CD14-positive monocyte (primary cell): ENCODE measurements at regions of chr2 and their contacts with region 1.

Region 1: GRCh38 chr2:231604685-231605606 is 12.3 kb downstream of the TEX44 start:
- DNase-seq: peak; percentile 99 to 100 (median 99)
- H3K4me3 ChIP-seq: peak overlapping the region; percentile 27 to 72 (median 29)
- H3K4me3 Mint-ChIP-seq: peak overlapping the region; percentile 54 to 77
- H3K27ac ChIP-seq: peak overlapping the region; percentile 62 to 96
- H3K27ac Mint-ChIP-seq: peak overlapping the region; percentile 76 to 95 (median 92)
- H3K4me1 ChIP-seq: peaks cover 13 to 27% of the 10 kb centered on the region in 2 donors
- H3K4me1 Mint-ChIP-seq: peaks cover 23% of the 10 kb centered on the region
- H3K27me3 ChIP-seq: no peaks in the 10 kb centered on the region
- H3K27me3 Mint-ChIP-seq: peaks cover 2 to 20% (median 18%) of the 10 kb centered on the region in 3 donors
- CTCF ChIP-seq: no peak

Region 2: DNA sequence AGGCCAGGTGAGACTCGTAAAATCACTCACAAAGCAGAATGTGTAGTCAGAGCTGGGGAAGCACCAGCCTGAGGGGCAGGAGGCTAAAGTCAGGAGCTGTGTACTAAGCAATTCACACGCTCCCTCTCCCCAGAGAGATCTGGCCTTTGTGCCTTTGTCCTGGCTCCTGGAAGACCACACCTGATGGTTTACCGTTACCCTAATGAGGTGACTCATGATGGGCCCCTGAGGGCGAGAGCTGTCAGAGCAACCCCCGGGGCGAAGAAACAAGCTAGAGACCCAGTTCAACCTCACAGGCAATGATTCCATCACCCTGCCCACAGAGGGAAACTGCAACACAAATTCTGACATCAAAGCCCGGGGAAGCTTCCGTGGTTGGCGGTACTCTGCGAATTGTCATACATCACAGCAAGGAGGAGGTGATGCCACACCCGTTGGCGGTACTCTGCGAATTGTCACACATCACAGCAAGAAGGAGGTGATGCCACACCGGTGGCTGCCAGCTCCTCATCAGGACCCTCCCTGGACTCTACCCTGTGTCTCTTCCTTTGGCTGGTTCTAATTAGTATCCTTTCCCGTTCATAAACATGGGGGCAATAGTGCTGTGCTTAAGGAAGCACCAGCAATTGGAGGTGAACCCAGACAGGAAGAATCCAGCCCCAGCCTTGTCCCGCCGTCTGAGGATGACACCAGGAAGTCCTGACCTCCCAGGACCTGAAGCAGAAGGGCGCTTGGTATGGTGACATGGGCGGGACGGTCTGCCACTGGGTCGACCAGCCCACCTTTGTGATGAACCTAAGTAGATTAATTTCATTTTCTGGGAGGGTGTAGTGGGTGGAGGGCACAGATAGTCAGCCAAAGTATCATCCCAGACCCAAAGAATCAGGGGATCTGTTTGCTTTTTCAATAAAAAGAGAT is 178.9 kb before region 1 on chr2:
- intact Hi-C with region 1: no loop called
- DNase-seq: no peak
- H3K4me3 ChIP-seq: no peak overlapping the region
- H3K4me3 Mint-ChIP-seq: no peak overlapping the region
- H3K27ac ChIP-seq: no peak overlapping the region
- H3K27ac Mint-ChIP-seq: no peak overlapping the region
- H3K4me1 ChIP-seq: no peaks in the 10 kb centered on the region
- H3K4me1 Mint-ChIP-seq: peaks cover 9% of the 10 kb centered on the region
- H3K27me3 ChIP-seq: no peaks in the 10 kb centered on the region
- H3K27me3 Mint-ChIP-seq: peaks cover 0 to 3% (median 1%) of the 10 kb centered on the region in 3 donors
- CTCF ChIP-seq: no peak

Region 3: DNA sequence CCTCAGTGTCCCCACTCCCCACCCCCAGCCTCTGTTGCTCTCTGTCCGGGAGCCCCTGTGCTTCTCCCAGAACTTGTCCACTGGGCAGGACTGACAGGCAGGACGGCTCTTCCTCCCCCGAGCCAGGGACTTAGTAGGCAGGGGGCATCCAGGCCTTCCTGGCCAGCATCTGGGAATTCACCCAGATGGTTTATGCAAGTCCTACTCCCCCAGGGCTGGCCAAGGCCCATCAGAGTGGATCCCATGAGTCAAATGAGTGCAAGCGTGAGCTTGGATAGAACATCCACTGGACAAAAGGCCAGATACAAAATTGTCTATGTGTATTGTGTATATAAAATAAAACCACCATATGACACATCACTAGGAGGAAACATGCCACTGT is 82.2 kb before region 1 on chr2:
- intact Hi-C with region 1: loop called in 1 of 2 experiments (anchors 5 kb)
- DNase-seq: no peak
- H3K4me3 ChIP-seq: no peak overlapping the region
- H3K4me3 Mint-ChIP-seq: no peak overlapping the region
- H3K27ac ChIP-seq: no peak overlapping the region
- H3K27ac Mint-ChIP-seq: no peak overlapping the region
- H3K4me1 ChIP-seq: peaks cover 11 to 19% of the 10 kb centered on the region in 2 donors
- H3K4me1 Mint-ChIP-seq: peaks cover 27% of the 10 kb centered on the region
- H3K27me3 ChIP-seq: peaks cover 0 to 19% of the 10 kb centered on the region in 2 donors
- H3K27me3 Mint-ChIP-seq: peaks cover 11 to 61% (median 36%) of the 10 kb centered on the region in 3 donors
- CTCF ChIP-seq: no peak

Region 4: DNA sequence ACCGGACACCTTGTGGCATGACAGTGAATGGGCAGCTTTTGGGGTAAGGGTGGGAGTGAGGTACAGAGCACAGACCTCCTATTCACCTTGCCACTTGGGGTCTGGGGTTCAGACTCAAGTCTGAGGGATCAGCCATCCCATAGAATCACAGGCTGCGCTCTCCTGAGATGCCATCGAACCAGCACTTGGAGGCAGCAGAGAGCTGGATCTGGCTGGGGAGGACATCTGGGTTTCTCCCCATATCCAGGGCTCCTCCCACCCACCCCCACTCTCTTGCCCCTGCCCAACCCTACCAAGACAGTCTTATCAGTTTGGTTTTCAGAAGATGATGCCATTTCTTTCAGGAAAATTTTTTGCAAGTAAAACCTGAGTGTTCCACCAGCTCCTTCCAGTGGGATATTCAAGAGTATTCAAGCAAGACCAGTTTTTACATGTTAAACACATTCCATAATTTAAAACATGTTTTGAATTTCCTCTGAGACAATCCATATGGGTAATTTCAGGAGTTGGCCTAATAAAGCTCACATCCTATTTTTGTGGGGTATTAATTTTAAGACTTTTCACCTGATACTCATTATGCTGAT is 41.5 kb before region 1 on chr2:
- intact Hi-C with region 1: loop called (anchors 5 kb)
- DNase-seq: peak; percentile 34 to 57 (median 43)
- H3K4me3 ChIP-seq: no peak overlapping the region
- H3K4me3 Mint-ChIP-seq: no peak overlapping the region
- H3K27ac ChIP-seq: no peak overlapping the region
- H3K27ac Mint-ChIP-seq: no peak overlapping the region
- H3K4me1 ChIP-seq: no peaks in the 10 kb centered on the region
- H3K4me1 Mint-ChIP-seq: no peaks in the 10 kb centered on the region
- H3K27me3 ChIP-seq: no peaks in the 10 kb centered on the region
- H3K27me3 Mint-ChIP-seq: peaks cover 0 to 3% (median under 1%) of the 10 kb centered on the region in 3 donors
- CTCF ChIP-seq: peak; percentile 78

Region 5: DNA sequence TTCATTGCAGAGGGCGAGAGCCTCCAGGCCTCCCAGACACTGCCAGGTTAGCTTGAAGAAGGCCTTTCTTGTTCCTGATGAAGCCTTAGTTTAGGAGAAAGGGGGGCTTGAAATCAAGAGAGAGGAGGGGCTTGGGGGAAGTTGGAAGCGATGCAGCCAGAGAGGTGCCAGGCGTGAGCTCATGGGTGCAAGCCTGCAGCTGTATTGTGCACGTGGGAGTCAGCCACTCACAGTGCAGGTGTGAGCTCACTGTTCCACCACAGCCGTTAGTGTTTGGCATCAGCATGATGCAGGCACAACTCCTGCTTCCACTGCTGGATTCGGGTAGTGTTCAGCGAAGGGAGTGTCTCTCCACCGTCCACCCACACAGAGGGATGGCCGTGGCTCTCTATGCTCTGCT is 705.2 kb after region 1 on chr2:
- intact Hi-C with region 1: no loop called
- DNase-seq: no peak
- H3K4me3 ChIP-seq: no peak overlapping the region
- H3K4me3 Mint-ChIP-seq: no peak overlapping the region
- H3K27ac ChIP-seq: no peak overlapping the region
- H3K27ac Mint-ChIP-seq: peak overlapping the region in 2 of 7 donors; percentile 36 to 67
- H3K4me1 ChIP-seq: peaks cover 14% of the 10 kb centered on the region in 2 donors
- H3K4me1 Mint-ChIP-seq: peaks cover 19% of the 10 kb centered on the region
- H3K27me3 ChIP-seq: no peaks in the 10 kb centered on the region
- H3K27me3 Mint-ChIP-seq: peaks cover 0 to 5% (median 3%) of the 10 kb centered on the region in 3 donors
- CTCF ChIP-seq: no peak